ENCODE measurements at regions of chr1 and their contacts with region 1.

Region 1: DNA sequence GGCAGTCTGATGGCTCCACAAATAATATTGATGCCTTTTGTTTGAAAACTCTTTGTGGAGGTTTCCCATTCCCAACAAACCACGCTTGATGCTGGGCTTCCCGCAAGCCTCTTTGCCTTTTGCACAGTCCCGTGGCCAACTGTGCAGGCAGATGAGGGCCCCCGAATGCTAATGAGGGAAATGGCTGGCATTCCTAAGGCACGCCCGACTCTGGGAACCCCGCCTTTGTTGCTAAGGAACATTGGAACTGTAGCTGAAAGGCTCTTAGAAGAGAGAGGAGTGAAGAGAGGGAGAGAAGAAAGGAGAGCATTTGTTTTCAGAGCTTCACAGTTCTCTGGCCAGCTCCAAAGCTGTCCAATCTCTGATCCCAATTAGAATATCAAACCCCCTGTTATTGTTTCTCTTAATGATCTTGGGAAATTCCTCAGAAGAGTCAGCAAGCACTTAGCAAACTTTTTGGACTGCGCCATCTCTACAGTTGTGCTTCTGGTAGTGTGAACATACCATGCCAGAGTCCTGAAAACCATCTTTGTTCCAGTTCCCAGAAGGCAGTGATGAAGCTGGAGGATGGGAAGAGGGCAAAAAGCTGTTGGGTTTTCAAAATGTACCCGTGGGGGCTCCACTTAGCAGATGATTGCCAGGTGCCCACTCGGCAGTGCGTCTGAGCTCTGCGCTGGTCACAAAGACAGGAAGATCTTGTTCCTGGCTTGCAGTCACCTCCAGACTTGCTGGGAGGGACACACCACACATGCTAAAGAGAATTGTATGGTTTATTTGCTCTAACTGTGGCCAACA is 60.1 kb upstream of the CYP2J2 start:
- DNase-seq: no peak

Region 2: DNA sequence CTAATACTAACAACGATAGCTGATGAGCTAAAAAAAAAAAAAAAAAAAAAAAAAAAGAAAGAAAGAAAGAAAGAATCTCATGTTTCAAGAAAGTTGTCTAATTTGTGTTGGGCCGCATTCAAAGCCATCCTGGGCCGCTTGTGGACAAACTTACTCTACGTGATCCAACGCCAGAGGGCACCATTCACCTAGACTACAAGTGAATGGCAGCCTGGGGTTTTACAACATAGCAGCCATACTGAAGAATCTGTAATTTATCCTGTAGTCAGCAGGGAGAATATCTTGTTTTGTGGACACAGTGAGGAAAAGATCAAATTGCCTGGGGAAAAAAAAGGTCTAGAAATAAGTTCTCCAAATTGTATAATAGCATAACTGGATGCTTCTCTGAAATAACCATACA is 107.1 kb before region 1 on chr1:
- intact Hi-C with region 1: no loop called
- DNase-seq: no peak

Region 3: GRCh38 chr1:59917026-59917784 is 69.5 kb before region 1 on chr1:
- intact Hi-C with region 1: no loop called
- DNase-seq: no peak

Region 4: DNA sequence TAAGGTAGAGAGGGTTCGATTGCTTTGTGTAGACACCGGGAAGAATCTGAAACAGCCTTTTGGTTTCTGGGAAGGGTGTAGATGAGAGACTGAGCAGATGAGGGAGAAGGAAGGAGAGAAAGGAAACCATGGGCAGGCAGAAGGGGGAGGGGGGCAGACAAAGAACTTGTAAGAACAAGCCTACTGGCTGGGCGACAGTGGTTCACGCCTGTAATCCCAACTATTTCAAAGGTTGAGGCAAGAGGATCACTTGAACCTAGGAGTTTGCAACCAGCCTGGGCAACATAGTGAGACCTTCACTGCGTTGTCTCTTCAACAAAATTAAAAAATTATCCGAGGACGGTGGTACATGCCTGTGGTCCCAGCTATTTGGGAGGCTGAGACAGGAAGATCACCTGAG is 1632.0 kb after region 1 on chr1:
- intact Hi-C with region 1: loop called in 1 of 2 experiments (anchors 5 kb)
- DNase-seq: no peak

Measured in posterior vena cava (tissue), 2 donors.